ENCODE measurements at regions of chr6 and their contacts with region 1.

Region 1: GRCh38 chr6:112282221-112282620 is 27.9 kb upstream of the LAMA4 start:
- DNase-seq: peak; percentile 67
- H3K4me3 ChIP-seq: no peak overlapping the region
- H3K27ac ChIP-seq: no peak overlapping the region
- H3K4me1 ChIP-seq: peaks cover 3% of the 10 kb centered on the region
- H3K27me3 ChIP-seq: no peaks in the 10 kb centered on the region
- CTCF ChIP-seq: peak; percentile 42

Region 2: DNA sequence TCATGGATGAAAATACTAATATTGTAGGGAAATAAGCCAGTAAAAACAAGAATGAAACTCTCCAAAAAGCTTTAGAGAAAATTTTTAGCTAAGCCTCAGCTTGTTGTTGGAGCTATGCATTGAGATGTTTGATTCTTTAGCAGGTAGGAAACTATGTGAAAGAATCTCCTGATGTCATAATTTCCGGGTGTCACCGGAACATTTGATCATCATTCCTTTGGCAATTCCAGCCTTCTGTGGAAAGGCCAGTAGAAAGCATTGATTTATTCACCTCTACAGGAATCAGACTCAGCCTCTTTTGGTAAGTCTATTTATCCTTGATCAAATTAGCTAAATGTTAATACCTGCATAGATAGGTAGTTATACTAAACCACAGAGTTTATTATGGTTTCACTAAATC is 185.3 kb before region 1 on chr6:
- CTCF ChIA-PET with region 1: interaction called, 11 read pairs
- POLR2A ChIA-PET with region 1: no interaction called
- intact Hi-C with region 1: no loop called
- DNase-seq: no peak
- H3K4me3 ChIP-seq: no peak overlapping the region
- H3K27ac ChIP-seq: no peak overlapping the region
- H3K4me1 ChIP-seq: no peaks in the 10 kb centered on the region
- H3K27me3 ChIP-seq: no peaks in the 10 kb centered on the region
- CTCF ChIP-seq: no peak

Region 3: GRCh38 chr6:112717401-112718255 is 435.4 kb after region 1 on chr6:
- CTCF ChIA-PET with region 1: no interaction called
- POLR2A ChIA-PET with region 1: no interaction called
- intact Hi-C with region 1: no loop called
- DNase-seq: no peak
- H3K4me3 ChIP-seq: no peak overlapping the region
- H3K27ac ChIP-seq: no peak overlapping the region
- H3K4me1 ChIP-seq: no peaks in the 10 kb centered on the region
- H3K27me3 ChIP-seq: no peaks in the 10 kb centered on the region
- CTCF ChIP-seq: no peak